A549 (cell line): ENCODE measurements at regions of chr14 and their contacts with region 1.

Region 1: DNA sequence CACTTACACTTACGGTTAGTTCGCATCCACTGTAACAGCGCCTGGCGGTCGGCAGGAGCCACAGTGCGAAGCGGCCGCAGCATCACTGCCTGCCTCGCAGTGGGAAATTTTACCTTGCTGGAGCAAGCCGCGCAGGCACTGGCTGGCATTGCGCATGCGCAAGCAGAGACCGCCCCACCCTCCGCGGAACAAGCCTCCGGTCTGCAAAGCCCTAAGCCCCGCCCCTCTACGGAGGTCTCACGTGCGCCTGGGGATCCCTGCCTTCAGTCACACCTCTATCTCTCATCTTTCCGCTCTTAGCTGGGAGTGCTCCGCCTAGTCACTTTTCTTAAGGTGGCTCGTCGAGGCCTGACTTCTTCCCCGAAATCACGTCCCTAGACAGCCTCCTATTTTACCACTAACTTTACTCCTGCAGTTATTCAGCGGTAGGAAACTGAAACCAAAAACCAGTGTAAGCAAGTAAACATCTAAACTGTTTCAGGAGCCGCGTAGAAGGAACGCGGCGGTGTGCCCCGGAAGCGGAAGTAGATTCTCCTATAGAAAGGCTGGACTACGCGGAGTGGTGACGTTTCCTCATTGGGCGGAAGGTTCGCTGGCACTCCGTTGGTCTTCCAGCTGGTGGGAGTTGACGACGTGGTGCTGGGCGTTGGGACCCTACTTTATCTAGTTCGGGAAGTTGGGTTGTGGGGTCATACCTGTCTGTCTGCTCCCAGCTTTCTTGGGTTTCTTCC is at the start of gene SRP54:
- DNase-seq: peak; percentile 90 to 99
- ATAC-seq: peak; percentile 90
- H3K4me3 ChIP-seq: peak within 1 kb of the TSS; percentile 84
- H3K27ac ChIP-seq: peak within 1 kb of the TSS; percentile 91 to 96
- H3K4me1 ChIP-seq: peaks cover 19% of the 10 kb centered on the region; the same call in 2 of the 3 replicates
- CTCF ChIP-seq: no peak
- EP300 ChIP-seq: no peak
- POLR2A ChIP-seq: peak; percentile 98
- RAD21 ChIP-seq: no peak; a peak in 1 of 5 replicates
- polyA plus RNA-seq, gene SRP54: 62.5 and 103 TPM in 2 replicates

Region 2: GRCh38 chr14:34536951-34537676 is 445.5 kb before region 1 on chr14:
- CTCF ChIA-PET with region 1: no interaction called
- POLR2A ChIA-PET with region 1: interaction called, 12 read pairs
- DNase-seq: no peak
- ATAC-seq: no peak
- H3K4me3 ChIP-seq: no peak overlapping the region
- H3K27ac ChIP-seq: no peak overlapping the region
- H3K4me1 ChIP-seq: peaks cover 17% of the 10 kb centered on the region; the same call in 2 of the 3 replicates
- CTCF ChIP-seq: no peak
- EP300 ChIP-seq: no peak
- POLR2A ChIP-seq: no peak
- RAD21 ChIP-seq: no peak

Region 3: GRCh38 chr14:34668111-34668510 is 314.5 kb before region 1 on chr14:
- CTCF ChIA-PET with region 1: interaction called, 10 read pairs
- POLR2A ChIA-PET with region 1: no interaction called
- DNase-seq: no peak
- ATAC-seq: no peak
- H3K4me3 ChIP-seq: no peak overlapping the region
- H3K27ac ChIP-seq: peak overlapping the region in 1 of 2 experiments; percentile 17; a peak in 3 of 6 replicates
- H3K4me1 ChIP-seq: peaks cover 16% of the 10 kb centered on the region
- CTCF ChIP-seq: no peak
- EP300 ChIP-seq: no peak
- POLR2A ChIP-seq: no peak
- RAD21 ChIP-seq: no peak

Region 4: DNA sequence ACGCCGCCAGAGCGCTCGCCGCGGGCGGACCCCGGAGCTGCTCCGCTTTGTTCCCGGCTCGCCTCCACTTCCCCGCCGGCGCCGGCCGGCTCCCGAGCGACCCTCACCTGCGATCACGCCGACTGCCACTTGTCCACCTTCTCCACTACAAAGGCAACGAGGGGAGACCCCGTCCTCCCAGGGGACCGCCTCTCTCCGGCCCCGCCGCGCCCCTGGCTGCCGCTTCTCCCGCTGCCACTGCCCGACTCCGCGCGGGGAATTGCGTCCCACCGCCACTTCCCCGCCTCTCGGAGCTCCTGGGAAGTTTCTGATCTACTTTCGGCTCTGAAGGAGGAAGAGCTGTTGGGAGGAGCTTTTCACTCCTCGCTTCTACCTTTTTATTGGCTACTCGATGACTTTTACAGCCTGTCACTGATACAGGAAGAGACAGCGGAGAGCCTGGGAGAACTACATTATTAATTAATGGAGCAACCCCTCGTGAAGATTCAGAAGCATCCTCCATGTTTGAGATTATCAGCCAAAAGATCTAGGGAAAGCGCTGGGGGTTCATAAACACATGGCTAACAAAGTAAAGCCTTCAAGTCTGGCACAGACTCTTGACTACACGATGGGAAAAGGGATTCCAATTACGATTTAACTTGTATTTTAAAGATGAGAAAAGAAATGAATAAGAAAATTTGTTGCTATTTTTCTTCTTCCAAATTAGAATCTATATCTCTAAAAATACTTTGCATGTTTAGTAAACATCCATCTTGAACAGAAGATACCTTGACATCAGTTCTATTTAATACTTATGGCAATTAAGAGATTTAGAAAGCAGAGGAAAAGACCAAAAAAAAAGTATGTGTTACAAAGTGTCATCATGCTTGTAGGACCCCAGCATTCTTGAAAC is 107.3 kb before region 1 on chr14 and contains the start of gene BAZ1A:
- CTCF ChIA-PET with region 1: interaction called, 7 read pairs
- POLR2A ChIA-PET with region 1: interaction called, 18 read pairs
- DNase-seq: peak; percentile 90 to 95
- ATAC-seq: peak; percentile 65 to 86
- H3K4me3 ChIP-seq: peak within 1 kb of the TSS; percentile 90
- H3K27ac ChIP-seq: peak within 1 kb of the TSS; percentile 94 to 95
- H3K4me1 ChIP-seq: peaks cover 15% of the 10 kb centered on the region
- CTCF ChIP-seq: no peak
- EP300 ChIP-seq: no peak
- POLR2A ChIP-seq: peak; percentile 89
- RAD21 ChIP-seq: no peak
- polyA plus RNA-seq, gene BAZ1A: 35.0 and 38.2 TPM in 2 replicates

Region 5: DNA sequence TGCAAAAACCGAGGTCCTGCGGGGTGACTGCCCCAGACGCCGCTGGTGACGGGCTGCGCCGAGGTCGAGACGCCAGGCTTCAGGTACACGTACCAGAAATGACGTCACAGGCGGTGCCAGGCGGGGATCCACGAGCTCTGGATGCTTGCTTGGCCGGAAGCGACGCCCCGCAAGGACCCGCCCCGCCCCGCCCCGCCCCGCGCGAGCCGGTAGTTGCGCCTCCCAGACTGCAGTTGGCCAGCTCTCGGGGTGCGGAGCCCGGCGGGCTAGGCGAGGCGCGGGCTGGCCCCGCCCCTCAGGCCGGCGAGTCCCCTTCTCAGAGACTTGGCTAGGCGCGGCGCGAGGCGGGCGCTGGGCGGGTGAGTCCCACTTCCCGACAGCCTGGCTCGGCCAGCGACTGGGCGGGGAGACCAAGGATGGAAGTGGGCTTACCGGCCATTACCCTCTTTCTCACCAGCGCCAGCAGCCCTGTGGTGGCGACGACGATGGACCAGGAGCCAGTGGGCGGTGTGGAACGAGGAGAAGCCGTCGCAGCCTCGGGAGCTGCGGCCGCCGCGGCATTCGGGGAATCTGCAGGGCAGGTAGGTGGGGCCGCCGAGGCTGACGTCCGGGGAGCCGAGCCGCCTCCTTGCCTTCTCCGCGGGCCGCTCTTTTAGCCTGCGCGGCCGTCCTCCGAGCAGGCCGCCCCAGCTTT is 63.6 kb after region 1 on chr14 and contains the start of gene FAM177A1:
- CTCF ChIA-PET with region 1: interaction called, 5 read pairs
- POLR2A ChIA-PET with region 1: interaction called, 36 read pairs
- DNase-seq: peak; percentile 96 to 98
- ATAC-seq: peak; percentile 93 to 97
- H3K4me3 ChIP-seq: peak within 1 kb of the TSS; percentile 82
- H3K27ac ChIP-seq: peak within 1 kb of the TSS; percentile 92 to 93
- H3K4me1 ChIP-seq: peaks cover 42% of the 10 kb centered on the region
- CTCF ChIP-seq: no peak
- EP300 ChIP-seq: no peak
- POLR2A ChIP-seq: peak; percentile 87
- RAD21 ChIP-seq: peak in 1 of 2 experiments; percentile 7; a peak in 1 of 5 replicates
- polyA plus RNA-seq, gene FAM177A1: 79.8 and 102 TPM in 2 replicates